CD8-positive, alpha-beta memory T cell (primary cell): ENCODE measurements at regions of chr12 and their contacts with region 1.

Region 1: DNA sequence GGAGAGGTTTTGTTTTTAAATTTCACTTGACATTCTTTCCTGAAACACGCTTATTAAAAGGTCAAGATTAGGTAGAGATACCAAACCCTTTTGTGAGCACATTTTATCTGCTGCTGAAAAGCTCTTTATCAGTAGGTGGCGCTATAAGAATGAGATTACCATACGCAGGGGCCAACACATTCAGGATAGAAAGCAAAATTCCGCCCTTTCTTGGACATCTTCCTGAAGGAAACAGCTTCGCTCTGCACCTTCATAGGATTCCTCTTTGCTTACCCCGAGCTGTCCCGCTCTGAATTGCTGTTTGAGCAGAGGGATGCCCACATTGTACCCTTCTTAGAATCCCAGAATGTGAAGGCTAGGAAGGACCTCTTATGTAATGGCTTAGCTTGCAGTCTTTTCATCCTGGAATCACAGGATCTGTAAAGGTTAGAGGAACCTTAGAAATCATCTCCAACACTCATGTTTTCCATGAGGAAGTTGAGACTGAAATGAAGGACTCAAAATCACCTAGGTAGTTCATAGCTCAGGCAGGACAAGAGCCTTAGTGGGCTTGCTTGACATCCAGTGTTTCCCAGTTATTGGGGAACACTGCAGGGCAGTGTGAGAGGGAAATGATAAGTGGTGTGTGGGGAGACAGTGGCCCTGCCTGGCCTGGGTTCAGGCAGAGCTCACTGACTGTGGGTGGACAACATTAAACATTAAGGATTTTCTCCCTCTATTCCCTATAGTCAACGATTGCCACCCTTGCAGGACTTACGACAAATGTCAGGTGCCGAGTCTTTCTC is 38.7 kb upstream of the CRY1 start:
- DNase-seq: peak in 2 of 5 donors; percentile 23 to 38
- H3K4me3 ChIP-seq: no peak overlapping the region
- H3K4me3 Mint-ChIP-seq: no peak overlapping the region
- H3K27ac ChIP-seq: no peak overlapping the region
- H3K27ac Mint-ChIP-seq: no peak overlapping the region
- H3K4me1 ChIP-seq: no peaks in the 10 kb centered on the region
- H3K4me1 Mint-ChIP-seq: peaks cover 2 to 4% (median 4%) of the 10 kb centered on the region in 3 donors
- H3K27me3 ChIP-seq: no peaks in the 10 kb centered on the region
- H3K27me3 Mint-ChIP-seq: peaks cover 0 to under 1% of the 10 kb centered on the region in 2 donors

Region 2: GRCh38 chr12:106941481-106942156 is 190.4 kb before region 1 on chr12:
- CTCF ChIA-PET with region 1: no interaction called
- POLR2A ChIA-PET with region 1: no interaction called
- DNase-seq: no peak
- H3K4me3 ChIP-seq: no peak overlapping the region
- H3K4me3 Mint-ChIP-seq: no peak overlapping the region
- H3K27ac ChIP-seq: no peak overlapping the region
- H3K27ac Mint-ChIP-seq: no peak overlapping the region
- H3K4me1 ChIP-seq: no peaks in the 10 kb centered on the region
- H3K4me1 Mint-ChIP-seq: no peaks in the 10 kb centered on the region
- H3K27me3 ChIP-seq: no peaks in the 10 kb centered on the region
- H3K27me3 Mint-ChIP-seq: peaks cover 0 to 4% of the 10 kb centered on the region in 2 donors

Region 3: GRCh38 chr12:107115119-107115518 is 16.9 kb before region 1 on chr12:
- CTCF ChIA-PET with region 1: interaction called, 15 read pairs
- POLR2A ChIA-PET with region 1: no interaction called
- DNase-seq: no peak
- H3K4me3 ChIP-seq: no peak overlapping the region
- H3K4me3 Mint-ChIP-seq: no peak overlapping the region
- H3K27ac ChIP-seq: no peak overlapping the region
- H3K27ac Mint-ChIP-seq: no peak overlapping the region
- H3K4me1 ChIP-seq: no peaks in the 10 kb centered on the region
- H3K4me1 Mint-ChIP-seq: no peaks in the 10 kb centered on the region
- H3K27me3 ChIP-seq: no peaks in the 10 kb centered on the region
- H3K27me3 Mint-ChIP-seq: peaks cover 11 to 33% of the 10 kb centered on the region in 2 donors

Region 4: DNA sequence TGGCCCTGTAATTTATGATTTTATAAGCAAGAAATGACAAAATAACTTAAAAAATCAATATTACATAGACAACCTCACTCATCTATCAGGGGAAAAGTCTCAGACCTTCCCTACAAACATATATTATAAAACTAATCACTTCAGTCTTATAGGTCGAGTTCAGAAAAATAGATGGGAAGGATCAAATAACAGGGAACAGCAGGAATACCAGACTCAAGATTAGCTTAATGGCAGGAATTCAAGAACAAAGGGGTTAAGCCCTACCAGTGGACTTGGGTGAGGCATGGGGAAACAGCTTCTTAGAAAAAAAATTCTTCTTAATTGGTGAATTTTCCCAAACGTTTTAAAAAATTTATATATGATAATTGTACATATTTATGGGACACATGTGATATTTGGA is 13.0 kb after region 1 on chr12:
- CTCF ChIA-PET with region 1: interaction called, 13 read pairs
- POLR2A ChIA-PET with region 1: no interaction called
- DNase-seq: no peak
- H3K4me3 ChIP-seq: no peak overlapping the region
- H3K4me3 Mint-ChIP-seq: no peak overlapping the region
- H3K27ac ChIP-seq: no peak overlapping the region
- H3K27ac Mint-ChIP-seq: no peak overlapping the region
- H3K4me1 ChIP-seq: no peaks in the 10 kb centered on the region
- H3K4me1 Mint-ChIP-seq: no peaks in the 10 kb centered on the region
- H3K27me3 ChIP-seq: no peaks in the 10 kb centered on the region
- H3K27me3 Mint-ChIP-seq: peaks cover 0 to 3% of the 10 kb centered on the region in 2 donors

Region 5: DNA sequence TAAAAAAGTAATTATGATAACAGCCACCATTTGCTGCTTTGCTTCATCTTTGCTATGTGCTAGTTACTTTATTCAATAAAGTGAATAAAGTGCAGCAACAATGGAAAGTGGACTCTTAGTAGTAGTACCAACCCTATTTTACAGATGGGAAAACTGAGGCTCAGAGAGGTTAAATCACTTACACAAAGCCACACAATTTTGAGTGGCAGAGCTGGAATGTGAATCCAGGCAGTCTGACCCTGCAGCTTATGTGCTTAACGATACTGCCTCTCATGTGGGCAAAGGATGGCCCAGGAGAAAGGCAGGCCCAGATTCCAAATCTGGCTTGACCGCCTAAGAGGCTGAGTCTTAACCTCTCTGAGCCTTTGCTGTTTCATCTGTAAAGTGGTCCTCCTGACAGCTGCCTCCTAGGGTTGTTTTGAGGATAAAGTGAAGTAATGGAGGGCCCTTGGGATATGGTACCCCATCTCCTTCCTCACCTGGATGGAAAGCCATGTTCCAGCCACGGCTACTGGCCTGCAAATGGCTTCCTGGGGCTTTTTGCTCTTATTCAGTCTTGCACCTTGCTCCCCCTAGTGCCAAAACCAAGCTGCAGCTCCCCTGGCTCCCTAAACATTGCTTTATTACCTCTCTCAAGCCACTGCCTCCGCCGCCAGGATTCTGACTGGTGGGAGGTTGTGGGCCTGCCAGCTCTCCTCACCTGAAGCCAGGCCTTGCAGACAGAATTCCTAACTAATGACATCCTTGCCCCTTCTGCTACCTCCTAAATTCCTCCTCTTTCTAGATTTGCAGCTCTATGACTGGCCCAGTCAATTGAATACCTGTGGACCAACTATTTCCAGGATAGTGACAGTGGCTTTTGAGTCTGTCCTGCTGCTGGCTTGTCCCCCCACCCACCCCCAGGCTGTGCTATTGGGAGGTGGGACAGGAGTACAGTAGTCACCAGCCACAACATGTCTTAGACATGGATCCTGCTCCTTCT is 270.3 kb after region 1 on chr12:
- CTCF ChIA-PET with region 1: interaction called, 20 read pairs
- POLR2A ChIA-PET with region 1: no interaction called
- DNase-seq: peak; percentile 17 to 65 (median 37)
- H3K4me3 ChIP-seq: no peak overlapping the region
- H3K4me3 Mint-ChIP-seq: no peak overlapping the region
- H3K27ac ChIP-seq: no peak overlapping the region
- H3K27ac Mint-ChIP-seq: peak overlapping the region in 7 of 8 donors; percentile 2 to 86 (median 61)
- H3K4me1 ChIP-seq: peaks cover 7% of the 10 kb centered on the region
- H3K4me1 Mint-ChIP-seq: peaks cover 6 to 19% (median 16%) of the 10 kb centered on the region in 3 donors
- H3K27me3 ChIP-seq: no peaks in the 10 kb centered on the region
- H3K27me3 Mint-ChIP-seq: peaks cover 0 to 2% of the 10 kb centered on the region in 2 donors

Region 6: DNA sequence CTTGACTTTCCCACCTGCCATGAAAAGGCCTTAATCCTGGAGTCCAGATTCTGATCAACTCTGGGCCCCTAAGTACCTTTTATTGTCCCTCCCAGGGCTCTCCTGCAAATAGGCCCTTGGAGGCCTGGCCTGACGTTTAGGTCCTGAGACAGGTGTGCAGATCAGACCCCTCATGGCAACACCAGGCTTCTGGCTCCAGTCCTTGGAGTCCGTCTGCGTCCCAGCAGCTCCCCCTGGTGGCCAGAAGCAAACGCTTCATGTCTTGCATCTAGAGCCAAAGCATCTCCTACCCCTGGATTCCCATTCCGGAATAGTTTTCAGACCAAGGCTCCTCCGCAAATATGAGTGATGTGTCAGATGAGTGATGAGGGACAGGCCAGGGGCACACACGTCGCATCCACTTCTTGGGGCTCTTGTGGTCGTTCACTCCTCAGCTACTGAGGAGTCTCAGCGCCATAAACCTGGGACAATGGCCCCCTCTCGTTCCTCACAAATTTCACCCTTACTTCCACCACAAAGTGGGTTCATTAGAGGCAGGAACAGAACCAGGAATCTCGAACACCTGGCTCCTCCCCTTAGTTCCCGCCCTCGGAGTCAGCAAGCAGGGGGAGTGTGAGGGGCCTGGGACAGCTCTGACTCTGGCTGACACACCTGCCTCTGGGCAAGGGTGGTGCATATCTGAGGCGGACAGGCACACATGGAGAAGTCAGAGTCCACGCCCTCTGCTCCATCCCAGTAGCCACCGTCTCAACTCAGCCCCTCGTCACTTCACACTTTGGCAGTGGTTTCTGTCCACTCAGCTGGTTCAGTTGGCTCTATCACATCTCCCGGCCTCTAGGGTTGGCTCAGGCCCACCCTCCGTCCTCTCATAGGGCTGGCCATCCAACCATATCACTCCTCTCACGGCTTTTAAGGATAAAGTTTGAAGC is 475.7 kb after region 1 on chr12:
- CTCF ChIA-PET with region 1: interaction called, 117 read pairs
- POLR2A ChIA-PET with region 1: no interaction called
- DNase-seq: peak; percentile 49 to 84 (median 71)
- H3K4me3 ChIP-seq: no peak overlapping the region
- H3K4me3 Mint-ChIP-seq: peak overlapping the region in 1 of 7 donors; percentile 2
- H3K27ac ChIP-seq: no peak overlapping the region
- H3K27ac Mint-ChIP-seq: peak overlapping the region in 1 of 8 donors; percentile 3
- H3K4me1 ChIP-seq: no peaks in the 10 kb centered on the region
- H3K4me1 Mint-ChIP-seq: no peaks in the 10 kb centered on the region
- H3K27me3 ChIP-seq: no peaks in the 10 kb centered on the region
- H3K27me3 Mint-ChIP-seq: no peaks in the 10 kb centered on the region